ENCODE measurements at regions of chr22 and their contacts with region 1.

Region 1: GRCh38 chr22:41301105-41302020 is at the start of gene ZC3H7B:
- DNase-seq: peak; percentile 27
- H3K4me3 ChIP-seq: peak within 1 kb of the TSS; percentile 73
- H3K27ac ChIP-seq: peak within 1 kb of the TSS; percentile 73
- H3K27me3 ChIP-seq: no peaks in the 10 kb centered on the region
- CTCF ChIP-seq: peak; percentile 66
- polyA plus RNA-seq, gene ZC3H7B: 55.3 and 68.7 TPM in 2 replicates

Region 2: GRCh38 chr22:41285820-41286638 is 15.3 kb before region 1 on chr22 and contains the start of gene RANGAP1:
- CTCF ChIA-PET with region 1: interaction called, 6 read pairs
- POLR2A ChIA-PET with region 1: interaction called, 11 read pairs
- DNase-seq: peak; percentile 96
- H3K4me3 ChIP-seq: peak within 1 kb of the TSS; percentile 83
- H3K27ac ChIP-seq: peak within 1 kb of the TSS; percentile 94
- H3K27me3 ChIP-seq: no peaks in the 10 kb centered on the region
- CTCF ChIP-seq: peak; percentile 25; the same call in 1 of the 2 replicates
- polyA plus RNA-seq, gene RANGAP1: 75.8 and 94.9 TPM in 2 replicates

Region 3: GRCh38 chr22:41491374-41492100 is 190.2 kb after region 1 on chr22:
- CTCF ChIA-PET with region 1: no interaction called
- POLR2A ChIA-PET with region 1: no interaction called
- DNase-seq: no peak
- H3K4me3 ChIP-seq: no peak overlapping the region
- H3K27ac ChIP-seq: no peak overlapping the region
- H3K27me3 ChIP-seq: no peaks in the 10 kb centered on the region
- CTCF ChIP-seq: no peak

Region 4: GRCh38 chr22:41511521-41511968 is 210.2 kb after region 1 on chr22:
- CTCF ChIA-PET with region 1: no interaction called
- POLR2A ChIA-PET with region 1: no interaction called
- DNase-seq: no peak
- H3K4me3 ChIP-seq: no peak overlapping the region
- H3K27ac ChIP-seq: no peak overlapping the region
- H3K27me3 ChIP-seq: no peaks in the 10 kb centered on the region
- CTCF ChIP-seq: no peak